Psoas muscle (tissue), 8 donors: ENCODE measurements at regions of chr1 and their contacts with region 1.

Region 1: GRCh38 chr1:204572931-204573891 is 57.0 kb downstream of the MDM4 start:
- DNase-seq: no peak
- ATAC-seq: no peak
- H3K4me3 ChIP-seq: no peak overlapping the region
- H3K27ac ChIP-seq: no peak overlapping the region
- H3K4me1 ChIP-seq: no peaks in the 10 kb centered on the region
- H3K27me3 ChIP-seq: no peaks in the 10 kb centered on the region
- CTCF ChIP-seq: no peak

Region 2: GRCh38 chr1:204692325-204692840 is 119.2 kb after region 1 on chr1:
- intact Hi-C with region 1: loop called in 1 of 2 experiments (anchors 5 kb)
- DNase-seq: no peak
- ATAC-seq: no peak
- H3K4me3 ChIP-seq: no peak overlapping the region
- H3K27ac ChIP-seq: no peak overlapping the region
- H3K4me1 ChIP-seq: no peaks in the 10 kb centered on the region
- H3K27me3 ChIP-seq: peaks cover 0 to 11% (median 0%) of the 10 kb centered on the region in 3 donors
- CTCF ChIP-seq: no peak